Heart left ventricle (tissue), 16 donors: ENCODE measurements at regions of chr6 and their contacts with region 1.

Region 1: DNA sequence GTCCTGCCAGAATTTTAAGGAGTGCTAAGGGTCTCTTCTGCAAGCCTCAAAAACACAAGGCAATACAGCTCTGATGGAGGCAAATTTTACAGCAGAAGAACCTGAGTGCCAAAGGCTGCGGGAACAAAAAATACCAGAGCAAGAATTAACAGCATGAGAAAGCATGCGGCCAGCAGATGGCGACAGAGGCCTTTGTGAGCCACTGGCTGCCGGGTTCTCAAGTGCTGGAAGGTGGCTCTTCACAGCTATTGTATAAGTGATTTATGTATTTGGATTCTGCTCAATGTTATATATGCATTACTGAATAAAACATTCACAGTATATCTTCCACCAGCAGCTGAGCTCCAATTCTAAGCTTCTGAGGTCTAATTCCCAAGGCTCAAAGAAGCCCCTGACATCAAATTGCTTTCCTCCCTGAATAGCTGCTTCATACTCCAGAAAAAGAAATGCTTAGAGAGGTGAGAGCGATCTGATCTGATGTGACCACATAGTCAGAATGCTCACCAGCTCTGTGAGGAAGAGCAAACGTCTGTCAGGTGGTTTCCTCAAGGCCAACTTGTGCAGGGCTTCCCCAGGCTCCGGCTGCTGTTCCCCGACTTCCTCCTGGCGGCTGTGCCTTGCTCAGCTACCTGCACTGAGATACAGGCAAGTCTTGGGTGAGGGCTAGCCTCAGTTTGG is 58.6 kb downstream of the PPP1R3G start:
- DNase-seq: peak; percentile 79 to 91 (median 81)
- ATAC-seq: peak; percentile 53 to 85 (median 76)
- H3K4me3 ChIP-seq: no peak overlapping the region
- H3K27ac ChIP-seq: no peak overlapping the region
- H3K4me1 ChIP-seq: peaks cover 0 to 7% (median 0%) of the 10 kb centered on the region in 12 donors
- H3K27me3 ChIP-seq: no peaks in the 10 kb centered on the region
- CTCF ChIP-seq: peak; percentile 80 to 98 (median 92)
- POLR2A ChIP-seq: no peak

Region 2: GRCh38 chr6:4635666-4636065 is 508.1 kb before region 1 on chr6:
- intact Hi-C with region 1: no loop called
- DNase-seq: no peak
- ATAC-seq: no peak
- H3K4me3 ChIP-seq: no peak overlapping the region
- H3K27ac ChIP-seq: no peak overlapping the region
- H3K4me1 ChIP-seq: no peaks in the 10 kb centered on the region
- H3K27me3 ChIP-seq: no peaks in the 10 kb centered on the region
- CTCF ChIP-seq: no peak
- POLR2A ChIP-seq: no peak

Region 3: GRCh38 chr6:5061152-5061551 is 82.6 kb before region 1 on chr6:
- intact Hi-C with region 1: loop called in 1 of 10 experiments (anchors 5 kb)
- DNase-seq: no peak
- ATAC-seq: no peak
- H3K4me3 ChIP-seq: no peak overlapping the region
- H3K27ac ChIP-seq: no peak overlapping the region
- H3K4me1 ChIP-seq: no peaks in the 10 kb centered on the region
- H3K27me3 ChIP-seq: no peaks in the 10 kb centered on the region
- CTCF ChIP-seq: no peak
- POLR2A ChIP-seq: no peak

Region 4: GRCh38 chr6:5246141-5247097 is 102.6 kb after region 1 on chr6:
- intact Hi-C with region 1: loop called in 2 of 10 experiments (anchors 10 kb)
- DNase-seq: no peak
- ATAC-seq: no peak
- H3K4me3 ChIP-seq: no peak overlapping the region
- H3K27ac ChIP-seq: no peak overlapping the region
- H3K4me1 ChIP-seq: no peaks in the 10 kb centered on the region
- H3K27me3 ChIP-seq: no peaks in the 10 kb centered on the region
- CTCF ChIP-seq: no peak
- POLR2A ChIP-seq: no peak

Region 5: DNA sequence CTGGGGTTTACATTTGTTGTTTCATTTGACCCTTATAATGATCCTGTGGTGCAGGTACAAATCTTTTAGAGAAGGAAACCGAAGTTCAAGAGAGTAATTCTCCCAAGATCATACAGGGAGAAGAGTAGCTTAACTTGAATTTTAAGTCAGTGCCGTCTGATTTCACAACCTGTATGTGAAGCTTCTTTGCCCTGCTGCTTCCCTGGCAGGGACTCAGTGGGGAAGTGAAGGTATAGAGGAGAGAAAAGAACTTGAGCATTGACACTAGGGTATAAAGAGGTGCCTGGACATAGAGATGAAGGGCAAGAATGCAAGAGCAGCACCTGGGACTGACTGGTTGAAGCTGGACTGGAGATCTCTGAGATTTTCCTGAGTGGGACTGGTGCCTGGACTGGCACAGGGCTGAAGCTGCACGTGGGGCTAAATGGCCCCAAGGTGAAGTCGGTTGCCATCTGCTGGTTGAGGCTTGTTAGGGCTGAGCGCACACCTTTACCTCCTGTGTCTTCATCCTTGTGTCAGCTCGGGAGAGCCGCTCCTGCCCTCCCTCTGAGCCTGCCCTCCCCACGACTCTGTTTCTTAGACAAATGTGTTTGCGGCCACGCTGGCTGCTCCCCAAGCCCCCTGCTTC is 159.3 kb after region 1 on chr6:
- intact Hi-C with region 1: loop called in 5 of 10 experiments (anchors 2 to 5 kb)
- DNase-seq: peak; percentile 27 to 68 (median 44)
- ATAC-seq: peak; percentile 66 to 92 (median 90)
- H3K4me3 ChIP-seq: no peak overlapping the region
- H3K27ac ChIP-seq: no peak overlapping the region
- H3K4me1 ChIP-seq: peaks cover 0 to 17% (median 4%) of the 10 kb centered on the region in 12 donors
- H3K27me3 ChIP-seq: no peaks in the 10 kb centered on the region
- CTCF ChIP-seq: peak; percentile 22 to 63 (median 46)
- POLR2A ChIP-seq: no peak

Region 6: GRCh38 chr6:6547110-6547879 is 1403.5 kb after region 1 on chr6:
- intact Hi-C with region 1: loop called in 3 of 10 experiments (anchors 5 to 10 kb)
- DNase-seq: peak; percentile 84 to 90 (median 89)
- ATAC-seq: peak; percentile 95 to 97 (median 96)
- H3K4me3 ChIP-seq: peak overlapping the region; percentile 30 to 58 (median 52)
- H3K27ac ChIP-seq: peak overlapping the region in 5 of 12 donors; percentile 17 to 61 (median 47)
- H3K4me1 ChIP-seq: peaks cover 2 to 23% (median 9%) of the 10 kb centered on the region in 12 donors
- H3K27me3 ChIP-seq: peaks cover 0 to 19% (median 0%) of the 10 kb centered on the region in 9 donors
- CTCF ChIP-seq: peak; percentile 91 to 98 (median 96)
- POLR2A ChIP-seq: no peak